Colonic mucosa (tissue), 4 donors: ENCODE measurements at regions of chr2 and their contacts with region 1.

Region 1: GRCh38 chr2:21317131-21317530 is 193.4 kb downstream of the TDRD15 start:
- DNase-seq: peak; percentile 54
- H3K4me3 ChIP-seq: no peak overlapping the region
- H3K27ac ChIP-seq: no peak overlapping the region
- H3K4me1 ChIP-seq: no peaks in the 10 kb centered on the region
- H3K27me3 ChIP-seq: no peaks in the 10 kb centered on the region
- CTCF ChIP-seq: peak; percentile 64

Region 2: GRCh38 chr2:21042958-21043743 is 274.0 kb before region 1 on chr2:
- intact Hi-C with region 1: loop called (anchors 5 kb)
- DNase-seq: peak; percentile 43
- H3K4me3 ChIP-seq: no peak overlapping the region
- H3K27ac ChIP-seq: no peak overlapping the region
- H3K4me1 ChIP-seq: peaks cover 4% of the 10 kb centered on the region
- H3K27me3 ChIP-seq: peaks cover 4% of the 10 kb centered on the region
- CTCF ChIP-seq: peak; percentile 98

Region 3: GRCh38 chr2:21175895-21176646 is 141.1 kb before region 1 on chr2:
- intact Hi-C with region 1: loop called (anchors 5 kb)
- DNase-seq: no peak
- H3K4me3 ChIP-seq: no peak overlapping the region
- H3K27ac ChIP-seq: no peak overlapping the region
- H3K4me1 ChIP-seq: no peaks in the 10 kb centered on the region
- H3K27me3 ChIP-seq: no peaks in the 10 kb centered on the region
- CTCF ChIP-seq: peak; percentile 38

Region 4: DNA sequence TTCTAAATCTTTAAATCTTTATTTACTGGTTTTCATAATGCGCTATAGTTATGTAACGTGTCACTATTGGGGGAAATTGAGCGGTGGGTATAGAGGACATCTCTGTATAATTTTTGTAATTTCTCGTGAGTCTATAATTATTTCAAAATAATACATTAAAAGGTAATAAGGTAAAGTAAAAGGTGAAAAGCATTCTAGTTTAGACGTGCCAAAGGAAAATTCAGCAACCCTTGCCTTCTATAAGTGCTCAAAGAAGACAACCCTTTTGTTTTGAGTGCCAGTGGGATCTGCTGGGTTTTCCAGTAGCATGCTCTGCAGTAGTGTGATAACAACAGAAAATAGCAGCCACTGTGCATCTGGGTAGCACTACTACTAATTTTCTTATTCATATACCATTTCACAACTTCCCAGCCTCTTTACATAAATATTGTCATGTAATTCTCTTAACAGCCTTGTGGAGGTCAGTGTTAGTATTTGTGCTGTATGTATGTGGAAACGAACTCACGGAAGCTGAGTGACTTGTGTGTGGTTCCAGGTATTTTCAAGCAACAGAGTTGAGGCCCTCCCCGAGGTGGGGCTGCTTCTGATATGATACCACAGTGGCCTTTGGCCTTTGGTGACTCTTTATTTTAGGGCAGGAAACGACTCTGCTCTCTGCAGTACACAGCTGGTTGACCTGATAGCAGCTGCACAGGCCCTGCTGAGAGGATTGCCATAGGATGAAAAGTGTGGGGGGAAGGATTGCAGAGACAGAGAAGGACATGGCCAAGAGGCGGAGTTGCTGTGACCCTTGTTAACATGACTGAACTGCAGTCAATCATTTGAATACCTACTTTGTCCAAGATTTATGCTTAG is 88.9 kb before region 1 on chr2:
- intact Hi-C with region 1: loop called (anchors 2 kb)
- DNase-seq: peak; percentile 50
- H3K4me3 ChIP-seq: no peak overlapping the region
- H3K27ac ChIP-seq: no peak overlapping the region
- H3K4me1 ChIP-seq: no peaks in the 10 kb centered on the region
- H3K27me3 ChIP-seq: no peaks in the 10 kb centered on the region
- CTCF ChIP-seq: no peak